PC-9 (cell line): ENCODE measurements at regions of chr1 and their contacts with region 1.

Region 1: GRCh38 chr1:43073490-43074230 is 98.4 kb downstream of the EBNA1BP2 start:
- DNase-seq: peak; percentile 63 to 83
- H3K4me3 ChIP-seq: no peak overlapping the region
- H3K27ac ChIP-seq: no peak overlapping the region
- H3K4me1 ChIP-seq: peaks cover 6% of the 10 kb centered on the region; the same call in 1 of the 2 replicates
- H3K27me3 ChIP-seq: no peaks in the 10 kb centered on the region
- CTCF ChIP-seq: peak; percentile 92

Region 2: DNA sequence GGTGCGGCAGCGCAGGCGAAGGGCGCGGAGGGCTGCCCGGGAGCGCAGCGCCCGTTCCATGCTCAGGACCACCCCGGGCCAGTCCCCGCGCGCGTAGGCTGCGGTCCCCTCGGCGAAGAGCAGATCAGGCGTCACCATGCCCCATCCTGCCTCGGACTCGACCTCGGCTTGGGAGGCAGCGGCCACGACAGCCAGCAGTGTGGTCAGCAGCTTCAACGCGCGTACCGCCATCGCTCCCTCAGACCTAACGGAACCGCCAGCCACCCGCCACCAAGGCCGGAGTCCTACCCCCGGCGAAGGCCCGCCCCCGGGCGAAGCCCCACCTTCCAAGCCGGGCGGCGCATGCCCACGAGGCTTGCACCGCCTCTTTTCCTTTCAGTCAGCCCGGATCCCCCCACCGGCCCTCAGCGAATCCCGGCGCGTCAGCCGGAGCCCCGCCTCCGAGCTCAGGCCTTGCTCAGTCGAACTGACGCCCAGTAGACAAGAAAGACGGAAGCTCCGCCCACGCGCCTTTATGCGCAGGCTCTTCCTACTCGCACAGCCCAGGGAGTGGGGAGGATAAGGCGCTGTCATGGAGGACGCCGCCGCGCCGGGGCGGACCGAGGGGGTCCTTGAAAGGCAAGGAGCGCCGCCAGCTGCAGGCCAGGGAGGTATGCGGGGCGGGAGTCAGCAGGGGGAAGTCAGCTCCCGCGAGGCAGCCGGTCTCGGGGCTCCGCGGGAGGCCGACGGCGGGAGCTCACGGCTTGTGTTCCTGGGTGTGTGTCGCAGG is 306.7 kb before region 1 on chr1 and contains the starts of genes C1orf50 and P3H1:
- CTCF ChIA-PET with region 1: interaction called, 11 read pairs
- POLR2A ChIA-PET with region 1: no interaction called
- intact Hi-C with region 1: no loop called
- DNase-seq: peak; percentile 96 to 100
- H3K4me3 ChIP-seq: peak within 1 kb of the TSS; percentile 86
- H3K27ac ChIP-seq: no peak within 1 kb of the TSS
- H3K4me1 ChIP-seq: peaks cover 24% of the 10 kb centered on the region
- H3K27me3 ChIP-seq: no peaks in the 10 kb centered on the region
- CTCF ChIP-seq: no peak
- total RNA-seq, gene C1orf50: 5.6 and 8.3 TPM in 2 replicates
- total RNA-seq, gene P3H1: 22.8 and 45.5 TPM in 2 replicates

Region 3: GRCh38 chr1:42846257-42847110 is 227.2 kb before region 1 on chr1 and contains the start of gene ZNF691:
- CTCF ChIA-PET with region 1: interaction called, 11 read pairs
- POLR2A ChIA-PET with region 1: interaction called, 5 read pairs
- intact Hi-C with region 1: no loop called
- DNase-seq: peak; percentile 93
- H3K4me3 ChIP-seq: peak within 1 kb of the TSS; percentile 80
- H3K27ac ChIP-seq: no peak within 1 kb of the TSS
- H3K4me1 ChIP-seq: peaks cover 21% of the 10 kb centered on the region
- H3K27me3 ChIP-seq: no peaks in the 10 kb centered on the region
- CTCF ChIP-seq: peak; percentile 43; the same call in 1 of the 2 replicates
- total RNA-seq, gene ZNF691: 11.4 and 14.6 TPM in 2 replicates

Region 4: GRCh38 chr1:42924082-42924850 is 149.4 kb before region 1 on chr1:
- CTCF ChIA-PET with region 1: interaction called, 45 read pairs
- POLR2A ChIA-PET with region 1: interaction called, 9 read pairs
- intact Hi-C with region 1: loop called (anchors 1 kb)
- DNase-seq: peak; percentile 81 to 96
- H3K4me3 ChIP-seq: peak overlapping the region; percentile 63
- H3K27ac ChIP-seq: peak overlapping the region; percentile 57
- H3K4me1 ChIP-seq: peaks cover 20% of the 10 kb centered on the region
- H3K27me3 ChIP-seq: no peaks in the 10 kb centered on the region
- CTCF ChIP-seq: no peak

Region 5: DNA sequence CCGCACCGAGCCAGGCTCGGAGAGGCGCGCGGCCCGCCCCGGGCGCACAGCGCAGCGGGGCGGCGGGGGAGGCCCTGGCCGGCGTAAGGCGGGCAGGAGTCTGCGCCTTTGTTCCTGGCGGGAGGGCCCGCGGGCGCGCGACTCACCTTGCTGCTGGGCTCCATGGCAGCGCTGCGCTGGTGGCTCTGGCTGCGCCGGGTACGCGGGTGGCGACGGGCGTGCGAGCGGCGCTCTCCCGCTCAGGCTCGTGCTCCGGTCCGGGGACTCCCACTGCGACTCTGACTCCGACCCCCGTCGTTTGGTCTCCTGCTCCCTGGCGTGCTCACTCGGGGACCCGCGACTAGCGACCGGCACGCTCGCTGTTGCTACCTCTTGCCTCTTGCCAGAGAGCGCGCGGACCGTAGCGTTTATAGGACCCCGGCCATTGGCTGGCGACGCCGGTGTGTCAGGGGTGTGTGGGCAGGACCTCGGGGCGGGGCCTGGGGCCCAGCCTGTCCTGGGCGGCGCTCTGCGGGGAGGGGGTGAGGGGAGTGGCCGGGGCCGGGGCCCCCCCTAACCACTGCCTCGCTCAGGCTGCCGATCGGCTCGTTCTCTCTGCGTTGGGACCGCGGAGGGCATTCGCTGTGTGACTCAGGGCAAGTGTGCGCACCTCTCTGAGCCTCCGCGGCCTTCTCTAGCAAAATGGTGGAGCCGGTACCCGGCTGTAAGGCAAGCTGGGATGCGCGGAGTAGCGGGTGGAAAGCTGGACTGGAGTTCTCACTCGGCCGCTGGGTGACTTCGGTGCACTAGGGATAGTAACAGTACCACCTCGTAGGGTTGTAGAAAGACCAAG is 115.0 kb before region 1 on chr1 and contains the start of gene SLC2A1:
- CTCF ChIA-PET with region 1: interaction called, 7 read pairs
- POLR2A ChIA-PET with region 1: no interaction called
- intact Hi-C with region 1: loop called (anchors 2 kb)
- DNase-seq: peak; percentile 81 to 97
- H3K4me3 ChIP-seq: peak within 1 kb of the TSS; percentile 98
- H3K27ac ChIP-seq: peak within 1 kb of the TSS; percentile 76
- H3K4me1 ChIP-seq: peaks cover 61% of the 10 kb centered on the region
- H3K27me3 ChIP-seq: no peaks in the 10 kb centered on the region
- CTCF ChIP-seq: no peak
- total RNA-seq, gene SLC2A1: 327 and 337 TPM in 2 replicates

Region 6: DNA sequence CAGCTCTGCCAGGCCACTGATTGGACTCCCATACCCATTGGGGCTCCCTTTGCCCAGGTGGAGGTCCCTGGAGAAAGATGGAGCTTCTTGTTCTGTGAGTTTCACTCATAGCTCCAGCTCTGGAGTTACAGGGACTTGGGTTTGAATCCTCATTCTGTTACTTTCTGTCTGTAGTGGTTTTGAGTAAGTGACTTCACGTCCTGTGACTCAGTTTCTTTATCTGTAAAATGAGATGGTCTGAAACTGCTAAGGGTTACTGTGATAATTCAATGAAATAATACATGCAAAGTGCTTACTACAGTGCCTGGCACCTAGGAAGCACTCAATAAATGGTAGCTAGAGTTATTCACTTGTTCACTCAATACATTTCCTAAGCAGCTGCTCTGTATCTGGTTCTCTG is 26.5 kb before region 1 on chr1:
- CTCF ChIA-PET with region 1: no interaction called
- POLR2A ChIA-PET with region 1: no interaction called
- intact Hi-C with region 1: no loop called
- DNase-seq: no peak
- H3K4me3 ChIP-seq: no peak overlapping the region
- H3K27ac ChIP-seq: no peak overlapping the region
- H3K4me1 ChIP-seq: no peaks in the 10 kb centered on the region
- H3K27me3 ChIP-seq: no peaks in the 10 kb centered on the region
- CTCF ChIP-seq: no peak

Region 7: GRCh38 chr1:43171876-43172526 is 98.3 kb after region 1 on chr1 and contains the starts of genes CFAP57 and EBNA1BP2:
- CTCF ChIA-PET with region 1: no interaction called
- POLR2A ChIA-PET with region 1: no interaction called
- intact Hi-C with region 1: no loop called
- DNase-seq: peak; percentile 90 to 94
- H3K4me3 ChIP-seq: peak within 1 kb of the TSS; percentile 89
- H3K27ac ChIP-seq: peak within 1 kb of the TSS; percentile 32
- H3K4me1 ChIP-seq: peaks cover 15% of the 10 kb centered on the region; the same call in 1 of the 2 replicates
- H3K27me3 ChIP-seq: no peaks in the 10 kb centered on the region
- CTCF ChIP-seq: no peak
- total RNA-seq, gene CFAP57: 1.6 and 1.7 TPM in 2 replicates
- total RNA-seq, gene EBNA1BP2: 151 and 153 TPM in 2 replicates